Activated CD8-positive, alpha-beta T cell treated with anti-CD3 and anti-CD28 coated beads for 36 hours (primary cell): ENCODE measurements at regions of chr5 and their contacts with region 1.

Region 1: GRCh38 chr5:140145818-140146522 is 20.2 kb downstream of the IGIP start:
- DNase-seq: peak; percentile 58
- ATAC-seq: peak; percentile 76
- H3K4me3 Mint-ChIP-seq: peak overlapping the region; percentile 38
- H3K27ac Mint-ChIP-seq: no peak overlapping the region
- H3K4me1 Mint-ChIP-seq: peaks cover 17% of the 10 kb centered on the region
- H3K27me3 Mint-ChIP-seq: peaks cover 22% of the 10 kb centered on the region
- CTCF ChIP-seq: peak; percentile 78

Region 2: GRCh38 chr5:140015733-140016132 is 130.2 kb before region 1 on chr5:
- CTCF ChIA-PET with region 1: no interaction called
- POLR2A ChIA-PET with region 1: no interaction called
- intact Hi-C with region 1: no loop called
- DNase-seq: no peak
- ATAC-seq: no peak
- H3K4me3 Mint-ChIP-seq: no peak overlapping the region
- H3K27ac Mint-ChIP-seq: no peak overlapping the region
- H3K4me1 Mint-ChIP-seq: no peaks in the 10 kb centered on the region
- H3K27me3 Mint-ChIP-seq: peaks cover 3% of the 10 kb centered on the region
- CTCF ChIP-seq: no peak

Region 3: GRCh38 chr5:140073296-140073695 is 72.7 kb before region 1 on chr5:
- CTCF ChIA-PET with region 1: interaction called, 96 read pairs
- POLR2A ChIA-PET with region 1: no interaction called
- intact Hi-C with region 1: loop called (anchors 1 kb)
- DNase-seq: no peak
- ATAC-seq: no peak
- H3K4me3 Mint-ChIP-seq: no peak overlapping the region
- H3K27ac Mint-ChIP-seq: no peak overlapping the region
- H3K4me1 Mint-ChIP-seq: no peaks in the 10 kb centered on the region
- H3K27me3 Mint-ChIP-seq: peaks cover 19% of the 10 kb centered on the region
- CTCF ChIP-seq: peak; percentile 77

Region 4: DNA sequence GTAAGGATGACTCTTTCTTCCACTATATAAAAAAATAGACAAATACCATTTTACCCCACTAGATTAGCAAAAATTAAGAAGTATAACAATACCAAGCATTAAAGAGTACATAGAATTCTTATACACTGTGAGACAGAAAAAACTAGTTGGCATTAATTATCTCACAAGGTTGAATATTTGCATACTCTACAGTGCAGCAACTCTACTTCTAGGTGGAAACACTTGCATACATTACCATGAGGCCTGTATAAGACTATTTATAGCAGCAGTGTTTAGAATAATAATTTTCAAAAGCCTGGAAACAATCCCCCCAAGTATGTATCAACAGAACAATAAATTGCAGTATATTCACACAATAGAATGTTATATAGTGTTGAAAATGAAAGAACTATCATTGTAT is 51.1 kb before region 1 on chr5:
- CTCF ChIA-PET with region 1: interaction called, 10 read pairs
- POLR2A ChIA-PET with region 1: no interaction called
- intact Hi-C with region 1: no loop called
- DNase-seq: no peak
- ATAC-seq: no peak
- H3K4me3 Mint-ChIP-seq: no peak overlapping the region
- H3K27ac Mint-ChIP-seq: no peak overlapping the region
- H3K4me1 Mint-ChIP-seq: no peaks in the 10 kb centered on the region
- H3K27me3 Mint-ChIP-seq: peaks cover 6% of the 10 kb centered on the region
- CTCF ChIP-seq: no peak

Region 5: GRCh38 chr5:140113699-140114263 is 32.2 kb before region 1 on chr5 and contains the start of gene PURA:
- CTCF ChIA-PET with region 1: interaction called, 91 read pairs
- POLR2A ChIA-PET with region 1: interaction called, 5 read pairs
- intact Hi-C with region 1: no loop called
- DNase-seq: peak; percentile 97
- ATAC-seq: peak; percentile 91
- H3K4me3 Mint-ChIP-seq: peak within 1 kb of the TSS; percentile 95
- H3K27ac Mint-ChIP-seq: peak within 1 kb of the TSS; percentile 91
- H3K4me1 Mint-ChIP-seq: peaks cover 63% of the 10 kb centered on the region
- H3K27me3 Mint-ChIP-seq: peaks cover 22% of the 10 kb centered on the region
- CTCF ChIP-seq: no peak
- total RNA-seq, gene PURA: 8.2 to 9.2 TPM

Region 6: GRCh38 chr5:140131967-140132409 is 14.0 kb before region 1 on chr5:
- CTCF ChIA-PET with region 1: interaction called, 41 read pairs
- POLR2A ChIA-PET with region 1: no interaction called
- intact Hi-C with region 1: no loop called
- DNase-seq: peak; percentile 30
- ATAC-seq: peak; percentile 80
- H3K4me3 Mint-ChIP-seq: no peak overlapping the region
- H3K27ac Mint-ChIP-seq: no peak overlapping the region
- H3K4me1 Mint-ChIP-seq: peaks cover 37% of the 10 kb centered on the region
- H3K27me3 Mint-ChIP-seq: no peaks in the 10 kb centered on the region
- CTCF ChIP-seq: no peak